T-cell (primary cell): ENCODE measurements at regions of chr3 and their contacts with region 1.

Region 1: GRCh38 chr3:158532099-158532734 is 38.8 kb upstream of the MLF1 start:
- DNase-seq: peak in 1 of 35 experiments; percentile 35
- ATAC-seq: no peak
- H3K4me3 ChIP-seq: no peak overlapping the region
- H3K4me3 Mint-ChIP-seq: no peak overlapping the region
- H3K27ac ChIP-seq: no peak overlapping the region
- H3K27ac Mint-ChIP-seq: no peak overlapping the region
- H3K4me1 ChIP-seq: no peaks in the 10 kb centered on the region
- H3K4me1 Mint-ChIP-seq: no peaks in the 10 kb centered on the region
- H3K27me3 ChIP-seq: no peaks in the 10 kb centered on the region
- H3K27me3 Mint-ChIP-seq: no peaks in the 10 kb centered on the region

Region 2: DNA sequence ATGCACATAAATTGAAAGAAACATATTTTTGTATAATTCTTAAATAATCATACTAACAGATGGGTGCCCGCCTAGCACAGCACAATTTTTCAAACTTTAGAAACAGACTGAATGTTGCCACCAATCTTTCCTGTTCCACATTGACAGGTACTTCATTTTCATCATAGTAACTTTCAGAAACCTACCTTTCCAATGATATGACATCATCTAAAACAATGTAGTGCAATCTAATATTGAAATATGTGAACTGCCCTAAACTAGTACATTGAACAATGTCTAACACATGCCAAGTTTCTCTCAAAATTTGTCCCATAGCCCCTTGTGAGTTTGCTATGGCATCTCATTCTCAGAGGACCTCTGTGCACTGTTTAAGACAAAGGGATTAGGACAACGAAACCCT is 35.0 kb after region 1 on chr3:
- CTCF ChIA-PET with region 1: interaction called in 1 of 2 experiments, 3 read pairs
- POLR2A ChIA-PET with region 1: interaction called in 1 of 2 experiments, 23 read pairs
- DNase-seq: no peak
- ATAC-seq: no peak
- H3K4me3 ChIP-seq: no peak overlapping the region
- H3K4me3 Mint-ChIP-seq: no peak overlapping the region
- H3K27ac ChIP-seq: no peak overlapping the region
- H3K27ac Mint-ChIP-seq: no peak overlapping the region
- H3K4me1 ChIP-seq: peaks cover 2 to 12% of the 10 kb centered on the region in 2 experiments
- H3K4me1 Mint-ChIP-seq: peaks cover 12 to 16% (median 13%) of the 10 kb centered on the region in 3 donors
- H3K27me3 ChIP-seq: peaks cover 0 to 22% of the 10 kb centered on the region in 2 experiments
- H3K27me3 Mint-ChIP-seq: peaks cover 42 to 43% of the 10 kb centered on the region in 2 donors

Region 3: DNA sequence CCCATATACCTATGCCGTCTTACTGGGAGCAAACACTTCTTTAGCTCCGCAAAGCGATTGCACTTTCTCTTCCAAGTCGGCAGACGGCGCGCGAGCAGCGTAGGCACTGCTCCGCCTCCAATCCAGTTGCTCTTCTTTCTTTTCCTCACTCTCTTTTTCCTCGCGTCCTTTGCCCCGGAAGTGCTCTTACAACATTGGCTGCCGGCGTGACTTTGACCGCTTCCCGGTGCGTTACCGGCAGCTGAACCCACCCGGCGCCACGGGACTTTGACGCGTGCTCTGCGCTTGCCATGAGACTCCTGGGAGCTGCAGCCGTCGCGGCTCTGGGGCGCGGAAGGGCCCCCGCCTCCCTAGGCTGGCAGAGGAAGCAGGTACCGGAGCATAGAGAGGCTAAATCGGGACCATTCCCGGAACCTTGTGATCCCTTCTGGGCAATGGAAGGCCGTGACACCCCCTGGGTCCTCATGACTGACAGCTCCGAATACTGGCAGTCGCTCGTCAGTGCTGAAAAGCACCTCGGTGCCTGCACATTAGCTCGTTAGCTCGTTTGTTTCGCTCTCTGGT is 112.2 kb after region 1 on chr3 and contains the start of gene GFM1:
- CTCF ChIA-PET with region 1: no interaction called
- POLR2A ChIA-PET with region 1: no interaction called
- DNase-seq: peak; percentile 73 to 95 (median 87)
- ATAC-seq: peak; percentile 94 to 98 (median 96)
- H3K4me3 ChIP-seq: peak within 1 kb of the TSS; percentile 74 to 99
- H3K4me3 Mint-ChIP-seq: peak within 1 kb of the TSS; percentile 89 to 97 (median 96)
- H3K27ac ChIP-seq: peak within 1 kb of the TSS; percentile 40
- H3K27ac Mint-ChIP-seq: peak within 1 kb of the TSS; percentile 88 to 94
- H3K4me1 ChIP-seq: peaks cover 6 to 19% of the 10 kb centered on the region in 2 experiments
- H3K4me1 Mint-ChIP-seq: peaks cover 38 to 53% (median 48%) of the 10 kb centered on the region in 3 donors
- H3K27me3 ChIP-seq: no peaks in the 10 kb centered on the region
- H3K27me3 Mint-ChIP-seq: no peaks in the 10 kb centered on the region
- total RNA-seq, gene GFM1: 39.0 to 46.8 (median 40.1) TPM